Panc1 (cell line): ENCODE measurements at regions of chr17 and their contacts with region 1.

Region 1: DNA sequence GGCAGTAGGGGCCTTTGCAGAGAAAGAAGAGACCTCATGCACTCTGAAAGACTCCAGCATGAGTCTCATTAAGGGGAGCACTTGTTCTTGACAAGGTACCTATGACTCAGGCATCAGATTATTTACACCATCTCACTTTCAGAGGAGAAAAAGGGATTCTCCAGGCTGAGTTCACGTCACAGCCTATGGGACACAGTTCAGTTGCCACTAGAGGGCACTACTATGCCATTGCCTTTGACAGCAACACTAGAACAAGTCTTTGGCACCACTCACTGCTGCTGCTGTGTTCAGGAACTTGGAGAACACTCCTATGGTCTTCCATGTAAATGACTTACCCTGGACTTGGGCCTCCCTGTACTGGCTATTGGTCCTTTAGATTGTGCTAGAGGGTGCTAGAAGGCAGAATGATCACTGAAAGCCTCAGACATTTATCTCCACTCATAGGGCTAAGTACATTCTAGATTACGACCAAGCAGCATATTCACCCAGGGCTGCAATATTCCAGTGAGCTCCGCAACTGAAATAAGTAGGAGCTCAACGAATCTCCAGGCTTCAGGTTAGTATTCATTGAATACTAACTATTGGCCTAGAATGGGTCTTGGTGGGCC is 225.1 kb upstream of the CA10 start:
- DNase-seq: peak; percentile 25
- ATAC-seq: peak; percentile 91
- H3K4me3 ChIP-seq: no peak overlapping the region
- H3K27ac ChIP-seq: no peak overlapping the region
- H3K4me1 ChIP-seq: no peaks in the 10 kb centered on the region
- H3K27me3 ChIP-seq: no peaks in the 10 kb centered on the region
- CTCF ChIP-seq: peak; percentile 78

Region 2: GRCh38 chr17:51876986-51877385 is 506.6 kb before region 1 on chr17:
- CTCF ChIA-PET with region 1: no interaction called
- POLR2A ChIA-PET with region 1: no interaction called
- in situ Hi-C with region 1: no loop called
- intact Hi-C with region 1: no loop called
- DNase-seq: no peak
- ATAC-seq: no peak
- H3K4me3 ChIP-seq: no peak overlapping the region
- H3K27ac ChIP-seq: no peak overlapping the region
- H3K4me1 ChIP-seq: no peaks in the 10 kb centered on the region
- H3K27me3 ChIP-seq: no peaks in the 10 kb centered on the region
- CTCF ChIP-seq: no peak

Region 3: GRCh38 chr17:51890710-51891109 is 492.9 kb before region 1 on chr17:
- CTCF ChIA-PET with region 1: interaction called, 10 read pairs
- POLR2A ChIA-PET with region 1: no interaction called
- in situ Hi-C with region 1: no loop called
- intact Hi-C with region 1: no loop called
- DNase-seq: no peak
- ATAC-seq: no peak
- H3K4me3 ChIP-seq: no peak overlapping the region
- H3K27ac ChIP-seq: no peak overlapping the region
- H3K4me1 ChIP-seq: no peaks in the 10 kb centered on the region
- H3K27me3 ChIP-seq: no peaks in the 10 kb centered on the region
- CTCF ChIP-seq: no peak

Region 4: GRCh38 chr17:52395308-52395707 is 11.7 kb after region 1 on chr17:
- CTCF ChIA-PET with region 1: no interaction called
- POLR2A ChIA-PET with region 1: no interaction called
- in situ Hi-C with region 1: no loop called
- intact Hi-C with region 1: no loop called
- DNase-seq: no peak
- ATAC-seq: no peak
- H3K4me3 ChIP-seq: no peak overlapping the region
- H3K27ac ChIP-seq: no peak overlapping the region
- H3K4me1 ChIP-seq: no peaks in the 10 kb centered on the region
- H3K27me3 ChIP-seq: no peaks in the 10 kb centered on the region
- CTCF ChIP-seq: no peak

Region 5: DNA sequence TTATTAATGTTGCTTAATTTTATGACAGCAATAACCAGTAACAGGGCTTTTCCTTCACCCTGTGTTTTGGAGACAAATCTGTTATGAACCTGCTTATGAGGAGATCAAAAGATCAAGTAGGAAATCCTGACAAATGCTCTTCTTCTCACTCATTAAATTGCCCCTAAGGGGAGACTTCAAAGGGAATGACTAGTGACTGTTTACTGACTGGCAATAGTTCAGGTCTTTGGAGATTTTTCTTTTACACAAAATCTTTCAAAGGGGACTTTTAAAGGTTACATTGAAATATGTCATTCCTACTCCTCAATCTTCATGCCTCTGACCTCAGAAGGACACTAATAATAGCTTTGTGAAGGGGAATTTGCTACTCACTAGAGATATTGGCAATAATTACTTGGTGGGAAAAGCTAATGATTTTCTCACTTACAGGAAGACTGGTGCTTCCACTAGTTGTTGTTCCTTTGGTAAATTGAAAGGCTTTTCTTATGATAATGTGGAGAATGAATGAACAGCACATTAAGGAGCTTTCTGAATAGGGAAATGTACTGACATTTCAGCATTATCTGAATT is 67.8 kb after region 1 on chr17:
- CTCF ChIA-PET with region 1: no interaction called
- POLR2A ChIA-PET with region 1: no interaction called
- in situ Hi-C with region 1: no loop called
- intact Hi-C with region 1: no loop called
- DNase-seq: no peak
- ATAC-seq: no peak
- H3K4me3 ChIP-seq: no peak overlapping the region
- H3K27ac ChIP-seq: no peak overlapping the region
- H3K4me1 ChIP-seq: no peaks in the 10 kb centered on the region
- H3K27me3 ChIP-seq: no peaks in the 10 kb centered on the region
- CTCF ChIP-seq: no peak

Region 6: DNA sequence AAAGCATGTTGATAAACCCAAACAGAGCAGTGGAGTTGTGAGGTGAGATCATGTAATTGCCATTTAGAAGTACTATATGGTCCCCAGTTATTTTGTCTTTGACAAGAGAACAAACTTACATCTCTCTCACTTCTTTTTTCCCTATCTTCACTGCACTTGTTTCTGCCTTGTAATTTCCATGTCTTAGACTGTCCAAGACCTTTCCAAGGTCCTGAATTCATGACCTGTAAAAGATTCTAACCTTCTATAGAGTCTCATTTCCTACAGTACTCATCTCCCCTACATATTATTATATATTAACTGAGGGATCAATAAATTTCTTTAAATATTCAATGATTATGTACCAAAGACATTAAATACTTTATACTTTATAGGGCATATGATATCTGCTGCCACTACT is 1143.9 kb after region 1 on chr17:
- CTCF ChIA-PET with region 1: interaction called, 16 read pairs
- POLR2A ChIA-PET with region 1: no interaction called
- in situ Hi-C with region 1: no loop called
- intact Hi-C with region 1: no loop called
- DNase-seq: no peak
- ATAC-seq: no peak
- H3K4me3 ChIP-seq: no peak overlapping the region
- H3K27ac ChIP-seq: no peak overlapping the region
- H3K4me1 ChIP-seq: no peaks in the 10 kb centered on the region
- H3K27me3 ChIP-seq: no peaks in the 10 kb centered on the region
- CTCF ChIP-seq: no peak